Activated CD8-positive, alpha-beta T cell treated with anti-CD3 and anti-CD28 coated beads, Interleukin-2, amount 10 ng/mL, durations not matched to agents 7 days and 5 days (primary cell): ENCODE measurements at regions of chr9 and their contacts with region 1.

Region 1: GRCh38 chr9:69919461-69920061 is 98.9 kb downstream of the CFAP95 start:
- DNase-seq: peak; percentile 24
- ATAC-seq: peak; percentile 77
- H3K4me3 Mint-ChIP-seq: no peak overlapping the region
- H3K27ac Mint-ChIP-seq: no peak overlapping the region
- H3K4me1 Mint-ChIP-seq: no peaks in the 10 kb centered on the region
- H3K27me3 Mint-ChIP-seq: peaks cover 10% of the 10 kb centered on the region

Region 2: DNA sequence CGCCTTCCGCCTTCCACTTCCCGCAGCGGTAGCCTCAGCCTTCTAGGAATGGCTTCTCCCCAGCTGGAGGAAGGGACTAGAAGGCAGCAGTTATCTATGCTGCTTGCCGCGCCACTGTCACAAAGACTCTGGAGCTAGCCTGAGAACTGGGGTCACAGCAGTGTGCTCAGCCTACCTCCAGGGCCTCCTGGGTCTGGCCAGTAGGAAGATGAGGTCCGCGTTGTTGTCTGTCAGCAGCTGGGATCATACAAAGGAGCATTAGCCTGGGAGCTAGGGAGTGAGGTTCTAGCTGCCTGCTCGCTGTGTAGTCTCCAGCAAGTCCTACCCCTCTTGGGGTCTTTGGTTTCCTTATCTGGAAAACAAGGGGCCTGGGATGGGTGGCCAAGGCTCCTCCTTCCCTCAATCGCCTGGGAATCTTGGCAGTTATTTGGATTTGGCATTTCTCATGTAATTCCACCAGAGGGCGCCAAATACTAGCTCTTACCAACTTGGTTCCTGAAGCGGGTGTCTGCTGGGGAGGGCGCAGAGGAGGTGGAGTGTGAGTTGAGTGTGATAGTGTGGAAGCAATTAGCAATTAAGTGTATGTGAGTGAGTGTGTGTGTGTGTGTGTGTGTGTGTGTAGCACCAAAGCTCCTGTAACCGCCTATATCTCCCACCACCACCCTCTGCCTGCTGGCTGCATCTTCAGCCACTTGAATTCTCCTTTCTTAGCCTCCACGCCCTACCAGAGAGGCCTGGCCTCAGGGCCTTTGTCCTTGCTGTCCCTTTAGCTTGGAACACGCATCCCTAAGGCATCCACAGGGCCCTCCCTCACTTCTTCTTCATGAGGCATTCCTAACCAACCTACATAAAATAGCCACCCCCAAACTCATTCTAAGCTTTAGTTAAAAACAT is 497.4 kb before region 1 on chr9:
- CTCF ChIA-PET with region 1: interaction called, 16 read pairs
- POLR2A ChIA-PET with region 1: no interaction called
- DNase-seq: peak; percentile 50
- ATAC-seq: peak; percentile 60
- H3K4me3 Mint-ChIP-seq: no peak overlapping the region
- H3K27ac Mint-ChIP-seq: no peak overlapping the region
- H3K4me1 Mint-ChIP-seq: no peaks in the 10 kb centered on the region
- H3K27me3 Mint-ChIP-seq: no peaks in the 10 kb centered on the region

Region 3: DNA sequence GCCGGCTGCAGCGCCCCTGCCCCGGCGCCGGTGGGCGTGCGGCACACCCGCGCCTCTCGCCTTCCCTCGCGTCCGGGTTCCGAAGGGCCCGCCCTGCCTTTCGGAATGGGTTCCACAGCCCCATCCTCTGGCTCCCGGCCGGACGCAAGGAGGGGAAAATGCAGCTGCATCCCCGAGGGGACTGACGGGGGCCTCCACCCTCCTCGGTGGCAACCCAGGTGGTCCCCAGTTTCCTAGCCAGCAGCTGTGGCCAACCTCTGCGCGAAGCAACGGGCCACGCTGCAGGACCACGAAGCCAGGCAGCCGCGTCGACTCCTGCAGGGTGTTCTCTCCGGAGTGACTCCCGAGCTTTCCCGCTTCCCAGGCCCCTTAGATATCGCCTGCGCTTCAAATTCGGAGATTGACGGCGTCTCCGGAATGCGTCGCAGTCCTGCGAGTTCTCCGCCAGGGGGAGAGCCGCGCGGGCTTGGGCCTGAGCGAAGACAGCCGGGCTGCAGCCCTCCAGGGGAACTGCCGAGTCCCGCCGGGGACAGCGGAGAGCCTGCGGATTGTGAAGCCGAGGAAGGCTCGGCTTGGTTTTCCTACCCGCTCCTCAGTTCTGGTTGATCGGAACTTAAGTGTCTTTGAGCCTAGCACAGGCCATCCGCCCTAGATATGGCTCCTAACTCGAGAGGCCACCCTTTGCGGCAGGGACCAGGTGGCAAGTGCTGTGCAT is 246.8 kb before region 1 on chr9:
- CTCF ChIA-PET with region 1: interaction called, 10 read pairs
- POLR2A ChIA-PET with region 1: no interaction called
- DNase-seq: peak; percentile 80
- ATAC-seq: peak; percentile 96
- H3K4me3 Mint-ChIP-seq: peak overlapping the region; percentile 73
- H3K27ac Mint-ChIP-seq: no peak overlapping the region
- H3K4me1 Mint-ChIP-seq: peaks cover 15% of the 10 kb centered on the region
- H3K27me3 Mint-ChIP-seq: peaks cover 31% of the 10 kb centered on the region